ENCODE measurements at regions of chr12 and their contacts with region 1.

Region 1: DNA sequence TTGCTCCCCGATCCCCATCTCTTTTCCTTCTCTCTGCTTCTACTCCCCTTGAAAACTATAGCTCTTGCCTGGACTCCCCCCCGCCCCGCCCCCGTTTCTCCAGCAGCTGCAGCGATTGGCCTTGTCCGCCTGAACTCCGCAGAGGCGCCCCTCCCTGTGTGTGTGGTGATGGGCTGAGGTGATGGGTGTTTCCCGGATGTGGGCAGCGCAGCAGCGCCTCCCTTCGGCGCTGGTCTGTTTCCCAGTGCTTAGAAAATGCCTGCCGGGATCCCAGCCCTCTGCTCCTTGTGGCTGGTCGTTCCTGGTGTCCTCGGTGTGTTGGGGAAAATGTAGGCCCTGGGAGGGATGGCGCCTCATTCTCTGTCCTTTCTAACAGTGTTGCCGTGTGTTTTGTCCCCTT is 43.3 kb downstream of the GALNT8 start:
- DNase-seq: peak; percentile 65
- H3K4me3 ChIP-seq: no peak overlapping the region
- H3K27ac ChIP-seq: no peak overlapping the region
- H3K4me1 ChIP-seq: no peaks in the 10 kb centered on the region
- H3K27me3 ChIP-seq: peaks cover 27% of the 10 kb centered on the region
- CTCF ChIP-seq: peak; percentile 60

Region 2: GRCh38 chr12:4307593-4308333 is 455.8 kb before region 1 on chr12:
- CTCF ChIA-PET with region 1: no interaction called
- POLR2A ChIA-PET with region 1: no interaction called
- intact Hi-C with region 1: loop called (anchors 2 kb)
- DNase-seq: peak; percentile 75
- H3K4me3 ChIP-seq: no peak overlapping the region
- H3K27ac ChIP-seq: no peak overlapping the region
- H3K4me1 ChIP-seq: no peaks in the 10 kb centered on the region
- H3K27me3 ChIP-seq: peaks cover 36% of the 10 kb centered on the region
- CTCF ChIP-seq: peak; percentile 63

Region 3: DNA sequence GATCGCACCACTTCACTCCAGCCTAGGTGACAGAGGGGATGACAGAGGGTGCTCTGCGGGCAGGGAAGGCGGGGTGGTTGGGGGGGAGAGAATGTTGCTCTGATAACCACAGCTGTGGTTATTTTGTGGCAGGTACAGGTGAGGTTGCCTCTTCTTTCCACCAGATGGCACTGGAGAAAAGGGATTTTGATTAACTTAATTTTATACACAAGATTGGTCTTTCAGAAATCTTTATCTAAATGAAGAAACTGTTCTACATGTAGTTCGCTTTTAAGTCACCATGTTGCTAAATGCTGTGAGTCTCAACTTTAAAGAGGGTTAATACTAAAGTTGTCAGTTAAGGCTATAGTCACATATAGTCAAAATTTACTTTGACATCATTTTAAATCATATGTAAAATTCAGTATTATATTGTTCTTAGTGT is 409.8 kb before region 1 on chr12:
- CTCF ChIA-PET with region 1: interaction called, 5 read pairs
- POLR2A ChIA-PET with region 1: no interaction called
- intact Hi-C with region 1: loop called (anchors 5 kb)
- DNase-seq: peak; percentile 24
- H3K4me3 ChIP-seq: no peak overlapping the region
- H3K27ac ChIP-seq: no peak overlapping the region
- H3K4me1 ChIP-seq: no peaks in the 10 kb centered on the region
- H3K27me3 ChIP-seq: no peaks in the 10 kb centered on the region
- CTCF ChIP-seq: peak; percentile 49

Region 4: DNA sequence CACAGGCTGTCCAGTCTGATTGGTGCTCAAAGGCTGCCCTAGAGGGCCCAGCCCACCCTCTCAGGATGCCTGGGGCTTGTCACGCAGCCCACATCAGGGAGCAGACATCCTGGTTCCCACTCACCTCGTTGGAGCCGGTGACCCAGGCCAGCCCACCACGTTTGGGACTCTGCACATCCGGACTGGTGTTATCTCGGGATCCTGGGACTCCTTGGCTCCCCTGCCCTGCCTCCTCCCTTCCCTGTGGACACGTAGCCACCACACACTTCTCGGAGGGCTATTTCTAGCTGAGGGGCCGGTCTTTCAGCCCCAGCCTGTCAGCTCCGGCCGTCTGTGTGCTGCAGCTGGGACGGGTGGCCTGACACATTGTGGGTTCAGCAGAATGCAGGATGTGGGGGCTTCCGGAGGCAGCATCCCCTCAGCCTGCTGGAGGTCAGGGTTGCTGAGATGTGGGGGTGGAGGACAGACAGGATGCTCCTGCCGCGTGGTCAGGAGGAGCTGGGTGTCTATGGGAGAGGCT is 371.3 kb before region 1 on chr12:
- CTCF ChIA-PET with region 1: interaction called, 14 read pairs
- POLR2A ChIA-PET with region 1: no interaction called
- intact Hi-C with region 1: no loop called
- DNase-seq: no peak
- H3K4me3 ChIP-seq: no peak overlapping the region
- H3K27ac ChIP-seq: no peak overlapping the region
- H3K4me1 ChIP-seq: no peaks in the 10 kb centered on the region
- H3K27me3 ChIP-seq: peaks cover 26% of the 10 kb centered on the region
- CTCF ChIP-seq: no peak

Region 5: GRCh38 chr12:4579305-4580102 is 184.0 kb before region 1 on chr12:
- CTCF ChIA-PET with region 1: no interaction called
- POLR2A ChIA-PET with region 1: no interaction called
- intact Hi-C with region 1: loop called (anchors 10 kb)
- DNase-seq: peak; percentile 46
- H3K4me3 ChIP-seq: no peak overlapping the region
- H3K27ac ChIP-seq: no peak overlapping the region
- H3K4me1 ChIP-seq: no peaks in the 10 kb centered on the region
- H3K27me3 ChIP-seq: peaks cover 19% of the 10 kb centered on the region
- CTCF ChIP-seq: 0 out of 2 replicates have a peak, but pooled peaks have one; percentile 17

Measured in A673 (cell line).